ENCODE measurements at regions of chr14 and their contacts with region 1.

Region 1: DNA sequence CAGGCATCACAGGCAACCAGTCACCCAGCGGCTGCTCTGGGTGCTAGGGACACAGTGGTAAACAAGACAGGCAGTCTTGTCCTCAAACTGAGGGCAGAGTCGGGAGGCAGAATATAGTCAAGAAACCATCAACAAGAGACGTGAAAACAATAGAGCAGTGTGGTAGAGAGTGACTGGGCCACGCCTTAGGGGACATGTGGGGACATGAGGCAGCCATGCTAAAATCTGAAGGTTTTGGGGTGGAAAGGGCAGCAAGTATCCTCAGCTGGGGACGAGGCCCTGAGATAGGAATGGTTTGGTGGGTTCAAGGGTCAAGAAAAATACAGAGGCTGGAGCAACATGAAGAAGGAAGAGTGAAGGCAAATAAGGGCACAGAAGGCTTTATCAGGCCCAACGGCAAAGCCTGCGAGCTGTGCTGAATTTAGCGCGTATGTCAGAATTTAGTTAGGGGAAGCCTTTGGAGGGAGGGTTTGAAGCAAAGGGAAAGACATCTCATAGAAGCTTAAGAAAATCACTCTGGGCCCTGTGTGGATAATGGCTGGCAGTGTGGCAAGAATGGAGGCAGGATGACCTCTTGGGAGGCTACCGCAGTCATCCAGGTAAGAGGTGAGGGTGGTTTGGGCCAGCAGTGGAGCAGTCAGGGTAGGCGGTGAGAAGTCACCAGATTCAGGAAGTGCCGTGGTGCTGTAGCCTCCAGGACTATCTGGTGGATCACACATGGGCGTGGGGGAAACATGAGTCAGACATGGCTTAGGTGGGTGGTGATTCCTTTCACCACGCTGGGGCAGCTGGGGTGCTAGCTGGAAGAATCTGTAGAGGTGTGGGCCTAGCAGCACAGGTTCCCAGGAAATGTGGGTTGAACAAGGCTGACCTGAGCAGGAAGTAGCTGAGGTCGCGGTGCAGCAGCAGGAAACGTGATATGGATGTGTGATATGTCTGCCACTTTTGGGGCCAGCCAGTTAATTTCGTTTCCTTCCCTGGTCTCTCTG is 3.0 kb downstream of the EVL start:
- DNase-seq: peak; percentile 92
- H3K4me3 Mint-ChIP-seq: peak overlapping the region; percentile 83
- H3K27ac Mint-ChIP-seq: peak overlapping the region; percentile 100
- H3K4me1 Mint-ChIP-seq: peaks cover 74% of the 10 kb centered on the region
- H3K27me3 Mint-ChIP-seq: no peaks in the 10 kb centered on the region

Region 2: GRCh38 chr14:99245564-99246511 is 822.4 kb before region 1 on chr14:
- CTCF ChIA-PET with region 1: no interaction called
- intact Hi-C with region 1: loop called (anchors 5 kb)
- DNase-seq: no peak
- H3K4me3 Mint-ChIP-seq: peak overlapping the region; percentile 77
- H3K27ac Mint-ChIP-seq: peak overlapping the region; percentile 93
- H3K4me1 Mint-ChIP-seq: peaks cover 76% of the 10 kb centered on the region
- H3K27me3 Mint-ChIP-seq: no peaks in the 10 kb centered on the region

Region 3: GRCh38 chr14:99683619-99684355 is 384.5 kb before region 1 on chr14 and contains the start of gene CYP46A1:
- CTCF ChIA-PET with region 1: no interaction called
- intact Hi-C with region 1: loop called (anchors 5 kb)
- DNase-seq: peak; percentile 100
- H3K4me3 Mint-ChIP-seq: peak within 1 kb of the TSS; percentile 87
- H3K27ac Mint-ChIP-seq: peak within 1 kb of the TSS; percentile 66
- H3K4me1 Mint-ChIP-seq: peaks cover 3% of the 10 kb centered on the region
- H3K27me3 Mint-ChIP-seq: peaks cover 4% of the 10 kb centered on the region
- total RNA-seq, gene CYP46A1: 0.10 to 0.12 TPM

Region 4: GRCh38 chr14:99982537-99983250 is 85.6 kb before region 1 on chr14:
- CTCF ChIA-PET with region 1: interaction called, 16 read pairs
- intact Hi-C with region 1: loop called (anchors 1 kb)
- DNase-seq: peak; percentile 76
- H3K4me3 Mint-ChIP-seq: no peak overlapping the region
- H3K27ac Mint-ChIP-seq: no peak overlapping the region
- H3K4me1 Mint-ChIP-seq: peaks cover 18% of the 10 kb centered on the region
- H3K27me3 Mint-ChIP-seq: no peaks in the 10 kb centered on the region

Region 5: GRCh38 chr14:100078991-100079725 is 10.9 kb after region 1 on chr14:
- CTCF ChIA-PET with region 1: interaction called, 164 read pairs
- intact Hi-C with region 1: loop called (anchors 1 kb)
- DNase-seq: peak; percentile 78
- H3K4me3 Mint-ChIP-seq: peak overlapping the region; percentile 74
- H3K27ac Mint-ChIP-seq: peak overlapping the region; percentile 96
- H3K4me1 Mint-ChIP-seq: peaks cover 94% of the 10 kb centered on the region
- H3K27me3 Mint-ChIP-seq: no peaks in the 10 kb centered on the region

Region 6: GRCh38 chr14:100155042-100155846 is 87.0 kb after region 1 on chr14:
- CTCF ChIA-PET with region 1: interaction called, 5 read pairs
- intact Hi-C with region 1: loop called (anchors 2 kb)
- DNase-seq: peak; percentile 60
- H3K4me3 Mint-ChIP-seq: no peak overlapping the region
- H3K27ac Mint-ChIP-seq: no peak overlapping the region
- H3K4me1 Mint-ChIP-seq: no peaks in the 10 kb centered on the region
- H3K27me3 Mint-ChIP-seq: peaks cover 17% of the 10 kb centered on the region

Region 7: DNA sequence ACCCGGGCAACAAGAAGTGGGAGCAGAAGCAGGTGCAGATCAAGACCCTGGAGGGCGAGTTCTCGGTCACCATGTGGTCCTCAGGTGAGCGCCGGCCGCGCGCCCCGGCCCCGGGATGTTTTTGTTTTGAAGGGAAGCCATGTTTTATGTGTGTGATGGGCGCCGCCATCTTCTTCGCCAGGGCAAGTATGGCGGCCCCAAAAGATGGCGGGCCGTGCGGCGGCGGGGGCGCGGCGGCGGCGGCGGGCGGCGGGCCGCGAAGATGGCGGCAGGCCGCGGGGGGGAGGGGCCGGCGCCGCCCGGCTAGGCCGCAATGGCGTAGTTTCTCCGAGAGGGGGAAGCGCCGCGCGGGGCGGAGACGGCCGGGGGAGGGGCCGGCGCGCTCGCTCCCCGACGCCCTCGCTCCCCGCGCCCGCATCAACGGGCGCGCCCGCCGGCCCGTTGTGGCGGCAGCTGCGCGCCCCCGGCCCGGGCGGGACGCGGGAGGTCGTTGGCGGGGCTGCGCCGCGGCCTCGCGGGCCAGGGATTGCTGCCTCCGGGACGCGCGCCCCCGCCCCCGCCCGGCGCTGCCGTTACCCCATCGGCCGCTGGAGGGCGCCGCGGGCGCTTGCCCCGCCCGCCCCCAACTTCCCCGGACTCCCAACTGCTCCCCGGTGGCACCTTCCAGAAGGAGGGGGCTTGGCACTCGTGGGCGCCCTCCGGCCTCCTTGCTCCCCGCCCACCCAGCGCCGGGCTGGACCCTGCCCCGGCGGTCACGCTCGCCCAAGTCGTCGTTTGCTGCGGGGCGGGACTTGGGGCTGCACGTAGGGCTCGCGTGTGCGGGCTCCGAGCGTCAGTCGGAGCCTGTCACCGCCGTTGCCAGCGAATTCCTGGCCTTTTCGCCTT is 171.8 kb after region 1 on chr14:
- CTCF ChIA-PET with region 1: interaction called, 3 read pairs
- intact Hi-C with region 1: loop called (anchors 1 kb)
- DNase-seq: peak; percentile 88
- H3K4me3 Mint-ChIP-seq: peak overlapping the region; percentile 86
- H3K27ac Mint-ChIP-seq: peak overlapping the region; percentile 88
- H3K4me1 Mint-ChIP-seq: peaks cover 52% of the 10 kb centered on the region
- H3K27me3 Mint-ChIP-seq: no peaks in the 10 kb centered on the region

Measured in activated naive CD4-positive, alpha-beta T cell treated with anti-CD3 and anti-CD28 coated beads for 36 hours (primary cell).